A549 (cell line): ENCODE measurements at regions of chr15 and their contacts with region 1.

Region 1: GRCh38 chr15:99123706-99124451 is 19.0 kb downstream of the SYNM start:
- DNase-seq: peak; percentile 92 to 94
- ATAC-seq: peak; percentile 86 to 93
- H3K4me3 ChIP-seq: peak overlapping the region; percentile 33
- H3K27ac ChIP-seq: peak overlapping the region; percentile 91 to 96
- H3K4me1 ChIP-seq: peaks cover 33% of the 10 kb centered on the region
- CTCF ChIP-seq: no peak
- EP300 ChIP-seq: peak; percentile 37 to 63; a peak in 3 of 5 replicates
- POLR2A ChIP-seq: no peak
- RAD21 ChIP-seq: peak; percentile 18 to 43; a peak in 2 of 5 replicates

Region 2: DNA sequence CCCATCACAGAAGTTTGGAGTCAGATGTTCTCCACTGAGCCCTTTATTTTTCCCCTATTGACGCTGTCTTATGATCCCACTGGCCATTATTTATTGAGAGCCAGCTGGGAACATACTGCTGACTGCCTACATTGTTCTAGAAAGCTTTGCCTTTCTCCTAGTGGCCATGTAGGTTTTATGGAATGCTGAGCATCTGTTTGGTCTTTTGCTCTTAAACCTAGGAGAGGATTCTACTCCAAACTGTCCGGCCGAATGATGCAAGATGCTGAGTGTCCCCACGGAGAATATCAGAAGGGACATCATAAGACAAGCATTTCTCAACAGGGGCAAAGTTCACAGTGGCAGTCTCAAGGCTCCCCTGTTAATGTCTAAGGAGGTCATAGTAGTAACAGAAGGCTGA is 992.0 kb before region 1 on chr15:
- CTCF ChIA-PET with region 1: no interaction called
- POLR2A ChIA-PET with region 1: no interaction called
- DNase-seq: no peak
- ATAC-seq: no peak
- H3K4me3 ChIP-seq: no peak overlapping the region
- H3K27ac ChIP-seq: no peak overlapping the region
- H3K4me1 ChIP-seq: no peaks in the 10 kb centered on the region
- CTCF ChIP-seq: no peak
- EP300 ChIP-seq: no peak
- POLR2A ChIP-seq: no peak
- RAD21 ChIP-seq: no peak

Region 3: DNA sequence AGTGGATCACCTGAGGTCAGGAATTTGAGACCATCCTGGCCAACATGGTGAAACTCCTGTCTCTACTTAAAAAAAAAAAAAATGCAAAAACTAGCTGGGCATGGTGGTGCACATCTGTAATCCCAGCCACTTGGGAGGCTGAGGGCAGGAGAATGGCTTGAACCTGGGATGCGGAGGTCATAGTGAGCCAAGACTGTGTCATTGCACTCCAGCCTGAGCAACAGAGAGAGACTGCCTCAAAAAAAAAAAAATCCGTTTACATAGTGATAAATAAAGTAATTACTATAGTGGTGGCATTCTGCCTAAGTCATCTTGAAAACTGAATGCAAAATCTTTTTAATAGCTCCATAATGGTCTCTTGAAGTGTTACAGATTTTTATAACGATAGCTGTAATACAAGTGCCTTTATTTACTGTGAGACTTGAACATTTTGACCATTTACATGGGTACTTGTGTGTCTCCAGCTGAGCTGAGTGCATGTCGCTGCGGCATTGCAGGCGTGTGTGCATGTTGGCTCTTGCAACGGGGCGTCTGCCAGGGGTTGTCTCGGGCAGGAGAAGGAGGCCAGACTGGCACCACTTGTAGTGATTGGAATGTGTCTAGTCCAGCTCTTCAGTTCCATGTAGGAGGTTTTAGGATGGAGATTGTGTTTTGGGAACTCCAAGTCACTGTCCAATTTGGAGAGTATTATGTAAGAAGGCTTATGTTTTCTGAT is 363.6 kb before region 1 on chr15:
- CTCF ChIA-PET with region 1: no interaction called
- POLR2A ChIA-PET with region 1: interaction called, 14 read pairs
- DNase-seq: no peak
- ATAC-seq: no peak
- H3K4me3 ChIP-seq: no peak overlapping the region
- H3K27ac ChIP-seq: no peak overlapping the region
- H3K4me1 ChIP-seq: peaks cover 67% of the 10 kb centered on the region
- CTCF ChIP-seq: no peak
- EP300 ChIP-seq: no peak
- POLR2A ChIP-seq: no peak
- RAD21 ChIP-seq: no peak